Mammary epithelial cell (primary cell): ENCODE measurements at regions of chr21 and their contacts with region 1.

Region 1: DNA sequence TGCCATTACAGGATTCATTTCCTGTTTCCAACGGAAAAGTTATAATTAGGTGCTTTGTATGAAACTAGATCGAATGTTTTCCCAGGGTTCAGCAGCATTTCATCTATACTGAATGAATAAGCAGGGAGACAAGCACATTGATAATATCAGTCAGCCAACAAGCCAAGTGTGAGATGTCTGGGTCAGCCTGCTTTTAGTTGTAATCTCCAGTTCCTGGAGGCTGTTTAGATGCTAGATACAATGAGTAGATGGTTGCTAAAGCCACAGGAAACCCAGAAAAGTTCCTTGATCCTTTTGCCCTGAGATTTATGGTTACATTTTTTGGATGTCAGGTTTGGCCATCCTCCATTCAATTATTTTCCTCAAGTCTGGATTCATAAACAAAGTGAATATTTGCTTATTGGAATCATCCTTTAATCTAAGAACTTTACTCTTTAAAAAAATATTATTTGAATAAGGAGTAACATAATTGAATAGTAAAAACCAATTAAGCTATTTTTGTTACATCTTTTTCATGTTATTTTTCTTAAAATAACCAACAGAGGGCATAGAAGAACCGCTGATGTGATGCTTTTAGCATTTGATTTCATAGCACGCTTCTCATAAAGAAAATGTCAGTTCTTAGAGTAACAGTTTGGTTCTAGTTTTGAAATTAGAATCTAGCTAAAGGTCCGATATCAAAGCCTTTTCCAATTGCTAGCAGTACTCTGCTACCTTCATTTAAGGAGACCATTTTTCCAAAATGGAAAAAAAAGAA is 76.6 kb downstream of the HSPA13 start:
- DNase-seq: no peak
- H3K4me3 ChIP-seq: no peak overlapping the region
- H3K27ac ChIP-seq: no peak overlapping the region
- H3K4me1 ChIP-seq: no peaks in the 10 kb centered on the region
- H3K27me3 ChIP-seq: peaks cover 2% of the 10 kb centered on the region
- CTCF ChIP-seq: peak; percentile 6 to 48

Region 2: DNA sequence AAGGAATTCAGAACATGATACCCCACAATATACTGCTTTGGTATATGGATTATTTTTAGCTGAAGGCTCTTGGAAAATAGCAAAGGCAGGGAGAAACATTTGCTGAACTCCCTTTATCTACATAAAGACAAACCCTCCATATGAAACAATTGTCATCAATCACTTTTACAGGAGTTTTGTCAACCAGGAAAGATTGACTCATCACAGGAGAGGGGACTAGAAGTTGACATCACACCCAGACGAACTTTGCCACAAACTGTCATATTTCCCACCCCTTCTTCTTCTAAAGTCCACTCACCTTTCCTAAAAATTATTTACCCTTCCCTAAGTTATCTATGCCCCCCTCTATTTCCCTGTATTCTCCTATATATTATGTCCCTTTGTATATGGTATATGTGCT is 42.5 kb before region 1 on chr21:
- CTCF ChIA-PET with region 1: no interaction called
- dilution Hi-C with region 1: no loop called
- in situ Hi-C with region 1: no loop called
- intact Hi-C with region 1: no loop called
- DNase-seq: no peak
- H3K4me3 ChIP-seq: no peak overlapping the region
- H3K27ac ChIP-seq: no peak overlapping the region
- H3K4me1 ChIP-seq: no peaks in the 10 kb centered on the region
- H3K27me3 ChIP-seq: no peaks in the 10 kb centered on the region
- CTCF ChIP-seq: no peak

Region 3: DNA sequence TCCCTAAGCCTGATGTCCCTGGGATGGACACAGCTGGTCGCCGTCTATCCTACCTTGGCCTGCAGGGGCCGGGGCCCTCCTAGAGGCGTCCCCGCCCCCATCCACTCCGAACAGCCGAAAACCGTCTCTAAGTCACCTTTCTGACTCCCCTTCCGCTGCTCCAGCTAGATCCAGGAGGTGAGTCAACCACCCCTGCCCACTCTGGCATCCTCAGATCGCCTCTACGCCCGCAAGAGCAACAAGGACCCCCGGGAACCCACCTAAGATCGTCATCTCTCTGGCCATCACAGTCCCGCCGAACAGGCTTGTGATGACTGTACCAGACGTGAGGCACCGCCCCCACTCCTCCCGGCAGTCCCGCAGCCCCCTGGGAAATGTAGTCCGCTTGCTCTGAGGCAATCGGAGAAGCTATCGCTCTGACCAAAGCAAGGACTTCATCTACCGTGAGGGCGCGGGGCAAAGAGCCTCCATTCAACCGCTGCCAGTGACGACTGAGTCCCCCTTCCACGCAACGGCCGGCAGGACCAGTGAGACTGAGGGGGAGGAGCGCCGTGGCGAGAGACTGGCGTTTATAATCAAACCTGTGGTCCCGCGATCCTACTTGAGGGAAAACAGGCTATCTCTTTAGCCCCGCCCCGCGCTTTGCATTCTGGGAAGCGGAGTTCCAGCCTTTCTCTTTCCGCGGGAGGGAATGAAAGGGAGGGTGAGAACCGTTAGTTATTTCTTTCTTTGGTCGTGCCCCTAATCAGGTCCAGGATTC is 76.7 kb after region 1 on chr21 and contains the start of gene HSPA13:
- CTCF ChIA-PET with region 1: no interaction called
- dilution Hi-C with region 1: no loop called
- in situ Hi-C with region 1: no loop called
- intact Hi-C with region 1: loop called (anchors 2 kb)
- DNase-seq: peak; percentile 100
- H3K4me3 ChIP-seq: peak within 1 kb of the TSS; percentile 81 to 92 (median 86)
- H3K27ac ChIP-seq: peak within 1 kb of the TSS; percentile 80
- H3K4me1 ChIP-seq: peaks cover 18% of the 10 kb centered on the region
- H3K27me3 ChIP-seq: no peaks in the 10 kb centered on the region
- CTCF ChIP-seq: no peak
- total RNA-seq, gene HSPA13: 48.3 to 76.7 TPM

Region 4: DNA sequence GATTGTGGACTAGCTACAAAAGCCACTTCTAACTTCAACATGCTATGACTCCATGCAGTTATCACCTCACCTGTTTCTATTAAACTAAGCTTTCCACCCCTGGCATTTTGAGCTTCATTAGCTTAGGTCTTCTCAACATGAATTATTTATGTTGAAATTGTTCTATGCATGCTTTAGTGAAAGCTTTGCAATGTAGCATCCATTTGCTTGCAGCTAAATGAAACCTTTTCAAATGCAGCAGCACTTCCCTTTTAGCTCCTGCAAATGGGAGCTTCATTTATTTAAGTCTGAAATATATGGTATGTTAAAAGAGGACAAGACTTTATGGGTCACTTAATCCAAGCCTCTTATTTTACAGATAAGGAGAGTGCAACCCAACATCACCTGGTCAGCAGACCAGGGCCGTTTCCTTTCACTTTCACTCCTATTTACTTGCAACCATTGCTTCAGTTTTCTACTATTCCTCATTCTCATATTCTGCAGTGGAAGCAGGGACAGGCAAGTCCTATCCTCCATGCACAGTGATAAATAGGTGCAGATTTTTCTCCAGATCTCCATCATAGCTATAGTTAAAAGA is 296.1 kb after region 1 on chr21:
- CTCF ChIA-PET with region 1: no interaction called
- dilution Hi-C with region 1: no loop called
- in situ Hi-C with region 1: no loop called
- intact Hi-C with region 1: no loop called
- DNase-seq: no peak
- H3K4me3 ChIP-seq: no peak overlapping the region
- H3K27ac ChIP-seq: no peak overlapping the region
- H3K4me1 ChIP-seq: peaks cover 11% of the 10 kb centered on the region
- H3K27me3 ChIP-seq: no peaks in the 10 kb centered on the region
- CTCF ChIP-seq: no peak

Region 5: GRCh38 chr21:14773777-14774345 is 467.5 kb after region 1 on chr21:
- CTCF ChIA-PET with region 1: no interaction called
- dilution Hi-C with region 1: no loop called
- in situ Hi-C with region 1: no loop called
- intact Hi-C with region 1: loop called (anchors 2 kb)
- DNase-seq: peak; percentile 30
- H3K4me3 ChIP-seq: no peak overlapping the region
- H3K27ac ChIP-seq: no peak overlapping the region
- H3K4me1 ChIP-seq: no peaks in the 10 kb centered on the region
- H3K27me3 ChIP-seq: peaks cover 3% of the 10 kb centered on the region
- CTCF ChIP-seq: peak; percentile 59 to 85

Region 6: GRCh38 chr21:15483138-15483780 is 1176.9 kb after region 1 on chr21:
- CTCF ChIA-PET with region 1: no interaction called
- dilution Hi-C with region 1: no loop called
- in situ Hi-C with region 1: no loop called
- intact Hi-C with region 1: loop called (anchors 5 kb)
- DNase-seq: peak; percentile 78
- H3K4me3 ChIP-seq: no peak overlapping the region
- H3K27ac ChIP-seq: no peak overlapping the region
- H3K4me1 ChIP-seq: peaks cover 4% of the 10 kb centered on the region
- H3K27me3 ChIP-seq: no peaks in the 10 kb centered on the region
- CTCF ChIP-seq: peak; percentile 90